ENCODE measurements at regions of chr13 and their contacts with region 1.

Region 1: DNA sequence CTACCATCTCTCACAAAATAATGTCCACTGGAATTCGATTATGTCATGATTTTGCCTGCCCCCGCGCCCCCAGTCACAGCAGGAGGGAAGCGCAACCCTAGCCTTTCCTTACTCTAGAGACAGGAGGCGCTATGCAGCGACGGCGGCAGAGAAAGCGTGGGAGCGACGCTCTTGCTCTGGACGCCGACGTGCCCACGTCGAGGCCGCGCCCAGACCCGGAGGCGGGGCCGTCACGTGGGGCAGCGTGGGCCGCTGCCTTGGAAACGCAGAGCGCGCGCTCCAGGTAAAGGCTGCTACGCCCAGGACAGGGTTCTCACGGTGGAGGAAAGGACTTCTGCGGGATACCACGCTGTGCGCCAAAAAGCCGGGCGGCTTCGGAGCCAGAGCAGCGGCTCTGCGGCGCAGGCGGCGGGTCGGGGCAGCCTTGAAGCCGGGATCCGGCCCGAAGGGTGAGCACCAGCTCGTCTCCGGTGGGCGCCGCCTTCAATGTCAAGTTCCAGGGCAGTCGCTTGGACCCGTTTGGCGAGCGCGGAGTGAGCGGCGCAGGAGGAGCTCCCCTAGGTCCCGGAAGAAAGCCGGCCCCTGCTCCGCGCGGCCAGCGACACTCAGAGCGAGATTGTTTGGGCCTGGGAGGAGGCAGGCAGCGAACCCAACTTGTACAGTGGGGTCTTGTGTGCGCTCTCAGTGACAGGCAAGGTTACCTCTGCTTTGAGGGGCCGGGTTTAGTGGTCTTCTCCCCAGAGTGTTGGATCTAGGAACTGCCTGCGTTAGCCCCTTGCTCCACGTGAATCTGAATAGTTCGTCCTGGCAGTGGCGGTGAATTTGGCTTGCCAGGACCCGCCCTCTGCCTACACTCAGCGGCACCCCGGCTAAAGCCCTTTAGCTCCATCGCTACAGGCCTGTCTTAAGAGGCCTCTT is 121.7 kb downstream of the MRPL57 start:
- DNase-seq: peak; percentile 83
- ATAC-seq: peak; percentile 97
- H3K4me3 ChIP-seq: peak overlapping the region; percentile 76 to 85 (median 83)
- H3K27ac ChIP-seq: peak overlapping the region; percentile 41
- H3K4me1 ChIP-seq: peaks cover 12% of the 10 kb centered on the region
- H3K27me3 ChIP-seq: no peaks in the 10 kb centered on the region
- CTCF ChIP-seq: peak; percentile 97
- EP300 ChIP-seq: peak in 1 of 2 experiments; percentile 52; a peak in 2 of 4 replicates
- POLR2A ChIP-seq: no peak
- RAD21 ChIP-seq: peak; percentile 55

Region 2: DNA sequence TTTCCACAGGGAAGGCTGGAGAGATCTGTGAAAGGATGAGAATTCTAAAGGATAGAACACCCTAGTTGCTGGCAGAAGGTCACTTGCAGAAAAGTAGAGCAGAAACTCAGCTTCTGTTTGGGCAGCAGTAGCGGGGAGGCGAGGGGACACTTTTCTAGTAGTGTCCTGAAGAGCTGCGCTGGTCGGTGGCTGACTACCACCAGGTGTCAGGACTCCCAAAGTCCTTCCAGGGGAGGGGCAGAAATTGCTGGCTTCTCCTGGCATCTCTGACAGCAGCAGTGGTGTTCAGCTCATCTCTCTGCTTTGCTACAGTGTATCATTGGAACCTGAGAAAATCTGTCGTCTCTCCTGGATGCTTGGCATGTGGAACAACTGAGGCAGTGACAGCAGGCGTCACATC is 40.0 kb after region 1 on chr13:
- CTCF ChIA-PET with region 1: no interaction called
- POLR2A ChIA-PET with region 1: no interaction called
- in situ Hi-C with region 1: no loop called
- intact Hi-C with region 1: loop called (anchors 2 kb)
- DNase-seq: peak; percentile 50
- ATAC-seq: peak; percentile 87
- H3K4me3 ChIP-seq: no peak overlapping the region
- H3K27ac ChIP-seq: no peak overlapping the region
- H3K4me1 ChIP-seq: 0 out of 2 replicates have a peak, but pooled peaks cover 7% of the 10 kb centered on the region
- H3K27me3 ChIP-seq: no peaks in the 10 kb centered on the region
- CTCF ChIP-seq: peak; percentile 59
- EP300 ChIP-seq: no peak
- POLR2A ChIP-seq: no peak
- RAD21 ChIP-seq: peak; percentile 19; the same call in 1 of the 2 replicates

Region 3: DNA sequence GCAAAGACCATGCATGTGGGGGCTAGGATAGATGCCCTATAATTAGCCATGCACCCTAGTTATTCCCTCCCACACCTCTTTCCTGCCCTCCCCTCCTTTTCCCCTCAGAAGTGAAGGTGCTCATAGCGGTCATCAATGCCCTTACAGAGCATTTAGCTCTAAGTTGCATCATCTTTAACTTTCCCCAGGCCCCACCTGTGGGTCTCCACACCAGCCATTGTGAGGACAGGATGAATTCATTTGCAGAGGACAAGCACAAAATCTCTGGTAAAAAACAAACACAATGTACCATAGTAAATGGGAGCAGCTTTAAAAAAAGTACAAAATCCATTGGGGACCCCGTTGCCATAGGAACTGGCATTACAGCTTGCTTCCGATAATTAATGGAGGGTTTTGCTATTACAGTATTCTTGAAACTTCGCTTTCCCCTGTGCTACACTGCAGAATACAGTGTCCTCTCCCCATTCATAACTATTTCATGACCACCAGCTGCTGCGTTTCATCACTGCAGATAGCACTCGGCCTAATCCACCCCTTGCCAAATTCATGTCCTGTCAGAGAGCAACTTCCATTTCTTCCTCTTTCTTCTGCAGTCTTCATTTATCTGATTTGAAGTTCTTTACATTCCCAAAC is 50.4 kb after region 1 on chr13:
- CTCF ChIA-PET with region 1: no interaction called
- POLR2A ChIA-PET with region 1: no interaction called
- in situ Hi-C with region 1: no loop called
- intact Hi-C with region 1: no loop called
- DNase-seq: no peak
- ATAC-seq: no peak
- H3K4me3 ChIP-seq: no peak overlapping the region
- H3K27ac ChIP-seq: no peak overlapping the region
- H3K4me1 ChIP-seq: no peaks in the 10 kb centered on the region
- H3K27me3 ChIP-seq: peaks cover 0 to 2% of the 10 kb centered on the region in 2 experiments; a peak in 1 of 5 replicates
- CTCF ChIP-seq: no peak
- EP300 ChIP-seq: no peak
- POLR2A ChIP-seq: no peak
- RAD21 ChIP-seq: no peak

Region 4: GRCh38 chr13:21458813-21459701 is 160.9 kb after region 1 on chr13 and contains the start of gene ZDHHC20:
- CTCF ChIA-PET with region 1: no interaction called
- POLR2A ChIA-PET with region 1: interaction called, 10 read pairs
- in situ Hi-C with region 1: no loop called
- intact Hi-C with region 1: no loop called
- DNase-seq: peak; percentile 72
- ATAC-seq: peak; percentile 94
- H3K4me3 ChIP-seq: peak within 1 kb of the TSS; percentile 98 to 100 (median 99)
- H3K27ac ChIP-seq: peak within 1 kb of the TSS; percentile 95
- H3K4me1 ChIP-seq: peaks cover 49% of the 10 kb centered on the region
- H3K27me3 ChIP-seq: no peaks in the 10 kb centered on the region; a peak in 1 of 5 replicates
- CTCF ChIP-seq: no peak
- EP300 ChIP-seq: no peak
- POLR2A ChIP-seq: peak; percentile 83 to 90
- RAD21 ChIP-seq: peak; percentile 50
- total RNA-seq, gene ZDHHC20: 58.0 and 59.9 TPM in 2 replicates